H1 (cell line): ENCODE measurements at regions of chr16 and their contacts with region 1.

Region 1: DNA sequence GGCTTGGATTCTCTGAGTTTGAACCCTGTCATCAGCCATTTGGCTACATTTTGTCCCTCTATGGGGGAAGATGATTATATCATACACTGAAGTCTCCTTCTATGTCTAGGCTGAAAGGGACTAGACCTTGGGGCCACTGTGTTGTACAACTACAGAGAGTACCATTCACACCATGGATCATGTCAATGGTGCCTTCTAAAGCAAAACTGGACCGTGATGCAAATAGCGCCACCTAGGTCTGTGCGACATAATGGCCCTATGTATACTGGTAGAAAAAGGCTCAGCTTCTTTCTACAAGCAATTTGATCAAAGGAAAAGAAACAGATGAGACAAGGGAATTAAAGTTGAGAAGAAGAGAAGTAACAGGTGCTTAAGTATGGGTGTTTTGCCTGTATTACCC is 100.7 kb downstream of the LYRM1 start:
- DNase-seq: peak in 1 of 2 experiments; percentile 54
- H3K4me3 ChIP-seq: no peak overlapping the region
- H3K27ac ChIP-seq: no peak overlapping the region
- H3K4me1 ChIP-seq: no peaks in the 10 kb centered on the region
- H3K27me3 ChIP-seq: no peaks in the 10 kb centered on the region
- CTCF ChIP-seq: peak; percentile 32 to 83 (median 65)
- EP300 ChIP-seq: no peak
- POLR2A ChIP-seq: no peak
- RAD21 ChIP-seq: peak; percentile 59 to 71

Region 2: GRCh38 chr16:20707461-20707860 is 293.8 kb before region 1 on chr16:
- CTCF ChIA-PET with region 1: no interaction called
- POLR2A ChIA-PET with region 1: no interaction called
- DNase-seq: no peak
- H3K4me3 ChIP-seq: no peak overlapping the region
- H3K27ac ChIP-seq: no peak overlapping the region; the same call in 1 of the 2 replicates
- H3K4me1 ChIP-seq: no peaks in the 10 kb centered on the region
- H3K27me3 ChIP-seq: no peaks in the 10 kb centered on the region
- CTCF ChIP-seq: no peak
- EP300 ChIP-seq: no peak
- POLR2A ChIP-seq: no peak
- RAD21 ChIP-seq: no peak

Region 3: GRCh38 chr16:20976576-20976975 is 24.7 kb before region 1 on chr16:
- CTCF ChIA-PET with region 1: interaction called, 15 read pairs
- POLR2A ChIA-PET with region 1: no interaction called
- DNase-seq: no peak
- H3K4me3 ChIP-seq: no peak overlapping the region
- H3K27ac ChIP-seq: no peak overlapping the region
- H3K4me1 ChIP-seq: no peaks in the 10 kb centered on the region
- H3K27me3 ChIP-seq: no peaks in the 10 kb centered on the region
- CTCF ChIP-seq: no peak
- EP300 ChIP-seq: no peak
- POLR2A ChIP-seq: no peak
- RAD21 ChIP-seq: no peak

Region 4: DNA sequence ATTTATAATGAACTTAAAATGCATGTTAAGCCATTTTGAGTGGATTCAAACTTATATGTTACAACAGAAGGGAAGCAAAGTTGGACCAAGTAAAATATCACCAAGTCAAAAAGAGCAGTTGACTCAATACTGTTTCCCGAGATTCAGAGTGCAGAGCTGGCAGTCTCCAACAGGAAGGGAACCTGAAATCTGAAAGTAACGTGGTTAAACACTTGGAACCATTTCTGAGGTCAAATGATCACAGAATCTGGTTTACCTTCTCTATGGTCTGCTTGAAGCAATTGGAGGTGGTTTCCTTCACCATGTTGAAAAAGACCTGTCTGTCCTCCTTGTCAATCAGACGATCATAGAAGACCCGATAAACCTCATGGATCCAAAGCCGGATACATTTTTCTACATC is 14.2 kb before region 1 on chr16:
- CTCF ChIA-PET with region 1: interaction called, 15 read pairs
- POLR2A ChIA-PET with region 1: no interaction called
- DNase-seq: no peak
- H3K4me3 ChIP-seq: no peak overlapping the region
- H3K27ac ChIP-seq: no peak overlapping the region
- H3K4me1 ChIP-seq: no peaks in the 10 kb centered on the region
- H3K27me3 ChIP-seq: no peaks in the 10 kb centered on the region
- CTCF ChIP-seq: no peak
- EP300 ChIP-seq: no peak
- POLR2A ChIP-seq: no peak
- RAD21 ChIP-seq: no peak

Region 5: DNA sequence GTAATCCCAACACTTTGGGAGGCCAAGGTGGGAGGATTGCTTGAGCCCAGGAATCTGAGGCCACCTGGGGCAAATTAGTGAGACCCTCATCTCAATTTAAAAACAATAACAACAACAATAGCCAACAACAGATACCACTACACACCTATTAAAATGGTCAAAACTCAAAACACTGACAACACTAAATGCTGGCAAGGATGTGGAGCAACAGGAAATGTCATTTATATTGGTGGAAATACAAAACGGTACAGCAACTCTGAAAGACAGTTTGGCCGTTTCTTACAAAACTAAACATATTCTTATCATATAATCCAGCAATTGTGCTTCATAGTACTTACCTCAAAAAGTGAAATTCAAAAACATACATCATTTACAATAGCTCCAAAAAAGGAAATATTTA is 91.7 kb after region 1 on chr16:
- CTCF ChIA-PET with region 1: no interaction called
- POLR2A ChIA-PET with region 1: no interaction called
- DNase-seq: no peak
- H3K4me3 ChIP-seq: no peak overlapping the region
- H3K27ac ChIP-seq: no peak overlapping the region
- H3K4me1 ChIP-seq: no peaks in the 10 kb centered on the region
- H3K27me3 ChIP-seq: no peaks in the 10 kb centered on the region
- CTCF ChIP-seq: no peak
- EP300 ChIP-seq: no peak
- POLR2A ChIP-seq: no peak
- RAD21 ChIP-seq: no peak

Region 6: GRCh38 chr16:21150375-21151001 is 149.2 kb after region 1 on chr16 and contains the start of gene DNAH3:
- CTCF ChIA-PET with region 1: no interaction called
- POLR2A ChIA-PET with region 1: no interaction called
- DNase-seq: no peak
- H3K4me3 ChIP-seq: no peak within 1 kb of the TSS
- H3K27ac ChIP-seq: no peak within 1 kb of the TSS
- H3K4me1 ChIP-seq: no peaks in the 10 kb centered on the region
- H3K27me3 ChIP-seq: no peaks in the 10 kb centered on the region
- CTCF ChIP-seq: no peak
- EP300 ChIP-seq: no peak
- POLR2A ChIP-seq: no peak
- RAD21 ChIP-seq: no peak
- total RNA-seq, gene DNAH3: 0.71 and 0.78 TPM in 2 replicates

Region 7: GRCh38 chr16:21184834-21185233 is 183.6 kb after region 1 on chr16:
- CTCF ChIA-PET with region 1: no interaction called
- POLR2A ChIA-PET with region 1: no interaction called
- DNase-seq: no peak
- H3K4me3 ChIP-seq: no peak overlapping the region
- H3K27ac ChIP-seq: no peak overlapping the region
- H3K4me1 ChIP-seq: no peaks in the 10 kb centered on the region
- H3K27me3 ChIP-seq: peaks cover 0 to 2% (median 0%) of the 10 kb centered on the region in 4 experiments; a peak in 2 of 7 replicates
- CTCF ChIP-seq: no peak
- EP300 ChIP-seq: no peak
- POLR2A ChIP-seq: no peak
- RAD21 ChIP-seq: no peak